HAP-1 (cell line): ENCODE measurements at regions of chr4 and their contacts with region 1.

Region 1: DNA sequence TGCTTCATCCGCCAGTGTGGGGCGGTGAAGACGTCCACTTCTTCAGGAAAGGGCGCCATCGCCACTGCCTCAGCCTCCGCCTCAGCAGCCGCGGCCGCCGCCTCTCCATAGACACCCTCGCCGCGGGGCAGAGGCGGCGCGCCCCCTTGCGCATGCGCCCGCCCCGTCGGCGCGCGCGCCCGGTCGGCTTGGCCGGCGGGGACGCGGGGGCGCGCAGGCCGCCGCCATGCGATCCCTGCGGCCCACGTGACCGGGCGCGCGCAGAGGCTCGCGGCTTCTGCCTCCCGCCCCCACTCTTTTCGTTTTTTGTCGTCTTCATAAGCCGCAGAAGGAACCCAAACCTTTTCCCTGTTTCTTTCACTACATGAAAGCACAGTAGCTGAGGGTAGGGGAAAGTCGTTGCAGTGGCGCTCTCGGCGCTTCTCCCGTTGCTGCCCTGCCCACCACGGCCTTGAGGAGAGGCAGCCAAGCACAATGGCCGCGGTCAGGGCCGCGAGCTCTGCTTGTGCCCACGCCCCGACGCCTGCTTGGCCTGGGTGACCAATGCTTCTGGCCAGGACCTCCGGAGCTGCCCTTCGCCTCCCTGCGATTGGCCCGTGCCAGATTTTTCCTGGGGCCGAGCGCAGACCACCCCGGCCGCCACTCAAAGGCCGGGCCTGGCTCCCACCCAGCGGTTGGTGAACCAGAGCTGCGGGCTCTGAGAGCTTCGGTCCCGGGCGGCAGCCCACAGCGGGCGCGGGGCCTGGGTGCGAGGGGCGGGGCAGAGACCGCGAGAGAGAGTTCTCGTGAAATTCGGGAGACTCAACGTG is at the start of gene FBXL5:
- DNase-seq: peak; percentile 81 to 83
- H3K4me3 ChIP-seq: peak within 1 kb of the TSS; percentile 64
- H3K4me1 ChIP-seq: peaks cover 30% of the 10 kb centered on the region
- H3K27me3 ChIP-seq: no peaks in the 10 kb centered on the region

Region 2: DNA sequence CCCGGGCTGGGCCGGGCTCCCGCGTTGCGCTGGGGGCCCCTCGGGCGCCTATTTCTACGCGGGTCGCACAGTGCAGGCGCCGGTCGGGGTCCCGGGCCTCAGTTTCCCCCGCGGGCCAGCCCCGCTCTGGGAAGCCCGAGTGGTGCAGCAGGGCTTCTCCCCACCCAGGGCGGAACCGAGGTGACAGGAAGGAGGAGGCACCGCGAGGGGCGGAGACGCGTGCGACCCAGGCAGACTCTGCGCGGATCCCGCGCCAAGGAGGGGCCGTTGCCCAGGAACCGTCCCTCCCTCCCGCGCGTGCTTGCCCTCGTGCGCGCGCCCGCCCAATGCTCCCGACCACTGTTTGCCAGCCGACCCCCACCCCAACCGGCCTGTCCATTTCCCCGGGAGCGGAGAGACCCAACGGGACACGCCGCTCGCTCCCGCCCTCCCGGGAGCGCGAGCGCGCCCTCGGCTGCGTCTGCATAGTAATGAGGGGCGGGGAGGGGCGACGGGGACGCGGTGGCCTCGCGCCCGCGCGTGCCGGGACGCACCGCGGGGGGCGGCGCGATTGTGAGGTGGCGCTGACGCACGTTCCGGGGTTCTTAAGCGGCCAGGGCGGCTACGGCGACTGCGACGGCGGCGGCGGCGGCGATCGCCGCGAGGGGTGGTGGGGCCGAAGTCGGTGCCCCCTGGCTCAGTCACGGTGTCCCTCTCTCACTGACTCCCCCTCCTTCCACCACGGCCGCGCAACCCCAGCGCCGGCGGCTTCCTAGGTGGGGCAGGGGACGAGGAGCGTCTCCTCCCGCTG is 653.4 kb before region 1 on chr4 and contains the start of gene CPEB2:
- in situ Hi-C with region 1: loop called (anchors 25 kb)
- DNase-seq: peak; percentile 85 to 97
- H3K4me3 ChIP-seq: peak within 1 kb of the TSS; percentile 76
- H3K4me1 ChIP-seq: peaks cover 17% of the 10 kb centered on the region
- H3K27me3 ChIP-seq: no peaks in the 10 kb centered on the region

Region 3: GRCh38 chr4:15250021-15250441 is 405.4 kb before region 1 on chr4:
- in situ Hi-C with region 1: no loop called
- DNase-seq: no peak
- H3K4me3 ChIP-seq: no peak overlapping the region
- H3K4me1 ChIP-seq: no peaks in the 10 kb centered on the region
- H3K27me3 ChIP-seq: no peaks in the 10 kb centered on the region